ENCODE measurements at regions of chr1 and their contacts with region 1.

Region 1: GRCh38 chr1:174999216-174999925 is 376 bp upstream of the CACYBP start:
- DNase-seq: peak; percentile 100
- ATAC-seq: peak; percentile 73
- H3K4me3 ChIP-seq: peak overlapping the region; percentile 73 to 93 (median 91)
- H3K4me3 Mint-ChIP-seq: no peak overlapping the region
- H3K27ac ChIP-seq: peak overlapping the region; percentile 99
- H3K27ac Mint-ChIP-seq: no peak overlapping the region
- H3K4me1 ChIP-seq: peaks cover 22 to 23% of the 10 kb centered on the region in 2 donors
- H3K4me1 Mint-ChIP-seq: peaks cover 36% of the 10 kb centered on the region
- H3K27me3 ChIP-seq: no peaks in the 10 kb centered on the region
- H3K27me3 Mint-ChIP-seq: no peaks in the 10 kb centered on the region
- CTCF ChIP-seq: no peak

Region 2: GRCh38 chr1:173824331-173825081 is 1174.9 kb before region 1 on chr1 and contains the starts of genes CENPL and DARS2:
- CTCF ChIA-PET with region 1: no interaction called
- POLR2A ChIA-PET with region 1: no interaction called
- intact Hi-C with region 1: loop called (anchors 1 kb)
- DNase-seq: peak; percentile 94
- ATAC-seq: peak; percentile 89
- H3K4me3 ChIP-seq: peak within 1 kb of the TSS; percentile 78 to 100 (median 93)
- H3K4me3 Mint-ChIP-seq: peak within 1 kb of the TSS; percentile 92
- H3K27ac ChIP-seq: peak within 1 kb of the TSS; percentile 77 to 87
- H3K27ac Mint-ChIP-seq: peak within 1 kb of the TSS; percentile 95
- H3K4me1 ChIP-seq: peaks cover 8 to 18% of the 10 kb centered on the region in 2 donors
- H3K4me1 Mint-ChIP-seq: peaks cover 21% of the 10 kb centered on the region
- H3K27me3 ChIP-seq: no peaks in the 10 kb centered on the region
- H3K27me3 Mint-ChIP-seq: no peaks in the 10 kb centered on the region
- CTCF ChIP-seq: no peak
- total RNA-seq, gene CENPL: 9.7 and 14.4 TPM in 2 replicates
- total RNA-seq, gene DARS2: 17.0 and 17.3 TPM in 2 replicates

Region 3: GRCh38 chr1:174262349-174263241 is 736.8 kb before region 1 on chr1:
- CTCF ChIA-PET with region 1: interaction called, 8 read pairs
- POLR2A ChIA-PET with region 1: interaction called, 3 read pairs
- intact Hi-C with region 1: loop called (anchors 10 kb)
- DNase-seq: peak; percentile 58
- ATAC-seq: peak; percentile 62
- H3K4me3 ChIP-seq: no peak overlapping the region
- H3K4me3 Mint-ChIP-seq: no peak overlapping the region
- H3K27ac ChIP-seq: no peak overlapping the region
- H3K27ac Mint-ChIP-seq: peak overlapping the region; percentile 67
- H3K4me1 ChIP-seq: peaks cover 4 to 9% of the 10 kb centered on the region in 2 donors
- H3K4me1 Mint-ChIP-seq: peaks cover 20% of the 10 kb centered on the region
- H3K27me3 ChIP-seq: no peaks in the 10 kb centered on the region
- H3K27me3 Mint-ChIP-seq: no peaks in the 10 kb centered on the region
- CTCF ChIP-seq: peak; percentile 81

Region 4: GRCh38 chr1:174800216-174800851 is 199.0 kb before region 1 on chr1:
- CTCF ChIA-PET with region 1: interaction called, 19 read pairs
- POLR2A ChIA-PET with region 1: interaction called, 21 read pairs
- intact Hi-C with region 1: loop called (anchors 1 kb)
- DNase-seq: no peak
- ATAC-seq: no peak
- H3K4me3 ChIP-seq: peak overlapping the region; percentile 65 to 97 (median 68)
- H3K4me3 Mint-ChIP-seq: no peak overlapping the region
- H3K27ac ChIP-seq: peak overlapping the region; percentile 78 to 88
- H3K27ac Mint-ChIP-seq: no peak overlapping the region
- H3K4me1 ChIP-seq: peaks cover 14 to 17% of the 10 kb centered on the region in 2 donors
- H3K4me1 Mint-ChIP-seq: peaks cover 14% of the 10 kb centered on the region
- H3K27me3 ChIP-seq: no peaks in the 10 kb centered on the region
- H3K27me3 Mint-ChIP-seq: no peaks in the 10 kb centered on the region
- CTCF ChIP-seq: no peak

Region 5: DNA sequence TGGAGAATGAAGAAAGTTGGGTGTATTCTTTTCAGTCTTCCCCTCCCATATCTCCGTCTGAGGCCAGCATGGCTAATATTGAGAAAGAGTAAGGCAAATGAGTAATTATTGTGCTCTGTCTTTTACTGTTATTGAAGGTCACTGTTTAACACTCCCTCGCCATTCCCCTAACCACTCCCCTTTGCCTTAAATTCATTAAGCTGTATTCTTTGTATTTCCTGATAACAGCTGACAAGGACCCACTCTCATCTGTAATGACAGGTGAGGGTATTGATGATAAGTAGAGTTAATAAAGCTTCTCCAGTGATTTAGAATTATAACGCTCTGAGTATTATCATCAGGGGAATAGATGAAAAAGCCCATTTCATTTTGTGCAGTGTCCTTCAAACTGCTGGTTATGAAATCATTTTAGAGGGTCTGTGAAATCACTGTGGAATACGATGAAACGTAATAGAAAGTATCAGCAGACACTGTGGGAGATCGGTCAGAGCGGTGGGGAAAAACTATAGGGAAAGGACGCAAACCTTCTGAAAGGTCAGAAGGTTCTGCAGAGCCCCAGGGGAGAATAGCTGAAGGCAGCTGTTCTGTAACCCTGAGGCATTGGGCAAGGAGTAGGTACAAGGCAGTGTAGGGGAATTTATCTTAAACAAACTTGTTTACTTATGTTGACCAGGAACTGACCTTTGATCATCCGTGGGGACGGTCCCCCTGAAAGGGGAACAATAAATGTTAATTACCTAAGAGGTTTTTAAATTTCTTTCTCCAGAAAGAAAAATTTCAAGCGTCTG is 45.9 kb before region 1 on chr1:
- CTCF ChIA-PET with region 1: interaction called, 4 read pairs
- POLR2A ChIA-PET with region 1: interaction called, 13 read pairs
- intact Hi-C with region 1: no loop called
- DNase-seq: no peak
- ATAC-seq: peak; percentile 72
- H3K4me3 ChIP-seq: no peak overlapping the region
- H3K4me3 Mint-ChIP-seq: peak overlapping the region; percentile 83
- H3K27ac ChIP-seq: peak overlapping the region; percentile 45 to 76
- H3K27ac Mint-ChIP-seq: peak overlapping the region; percentile 85
- H3K4me1 ChIP-seq: peaks cover 27 to 37% of the 10 kb centered on the region in 2 donors
- H3K4me1 Mint-ChIP-seq: peaks cover 51% of the 10 kb centered on the region
- H3K27me3 ChIP-seq: no peaks in the 10 kb centered on the region
- H3K27me3 Mint-ChIP-seq: no peaks in the 10 kb centered on the region
- CTCF ChIP-seq: no peak

Region 6: GRCh38 chr1:174982971-174983689 is 16.2 kb before region 1 on chr1:
- CTCF ChIA-PET with region 1: interaction called, 19 read pairs
- POLR2A ChIA-PET with region 1: interaction called, 3 read pairs
- intact Hi-C with region 1: no loop called
- DNase-seq: peak; percentile 67
- ATAC-seq: peak; percentile 24
- H3K4me3 ChIP-seq: no peak overlapping the region
- H3K4me3 Mint-ChIP-seq: no peak overlapping the region
- H3K27ac ChIP-seq: no peak overlapping the region
- H3K27ac Mint-ChIP-seq: peak overlapping the region; percentile 17
- H3K4me1 ChIP-seq: no peaks in the 10 kb centered on the region
- H3K4me1 Mint-ChIP-seq: peaks cover 4% of the 10 kb centered on the region
- H3K27me3 ChIP-seq: no peaks in the 10 kb centered on the region
- H3K27me3 Mint-ChIP-seq: no peaks in the 10 kb centered on the region
- CTCF ChIP-seq: peak; percentile 81

Region 7: DNA sequence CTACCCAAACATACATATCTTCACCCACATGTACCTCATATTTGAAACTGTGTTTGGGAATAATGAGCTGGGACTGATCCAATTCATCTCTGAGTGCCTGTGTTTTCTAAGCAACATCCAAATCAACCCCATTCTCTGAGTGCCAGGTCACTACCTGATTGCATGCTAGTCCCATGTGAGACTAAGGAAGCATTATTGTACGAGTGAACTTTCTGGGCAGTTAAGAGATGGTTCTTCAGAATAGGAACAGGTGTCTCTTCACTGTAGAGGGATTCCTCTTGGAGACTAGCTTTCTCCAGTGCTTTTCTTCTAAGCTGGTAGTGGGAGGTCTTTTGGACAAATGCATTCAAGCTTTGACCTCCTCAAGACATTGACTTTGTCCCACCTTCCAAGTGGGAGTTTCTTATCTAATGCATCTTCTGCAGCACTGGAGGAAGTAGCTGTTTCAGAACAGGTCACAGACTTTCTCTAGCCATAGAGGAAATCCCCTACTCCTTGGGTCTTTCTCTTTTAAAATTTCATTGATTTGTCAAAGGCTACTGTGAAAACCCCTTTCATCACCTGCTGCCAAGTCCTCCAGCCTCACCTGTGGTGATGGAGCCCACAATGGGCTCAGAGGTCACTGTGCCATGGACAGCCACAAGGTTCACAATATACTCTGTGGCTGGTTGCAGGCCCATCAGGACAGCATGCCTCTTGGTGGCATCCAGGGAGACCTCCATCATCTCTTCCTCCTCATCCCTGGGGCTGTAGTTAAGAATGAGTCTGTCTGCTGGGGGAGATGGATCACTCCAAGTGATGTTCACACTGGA is 365.3 kb after region 1 on chr1:
- CTCF ChIA-PET with region 1: no interaction called
- POLR2A ChIA-PET with region 1: no interaction called
- intact Hi-C with region 1: no loop called
- DNase-seq: no peak
- ATAC-seq: no peak
- H3K4me3 ChIP-seq: no peak overlapping the region
- H3K4me3 Mint-ChIP-seq: no peak overlapping the region
- H3K27ac ChIP-seq: no peak overlapping the region
- H3K27ac Mint-ChIP-seq: no peak overlapping the region
- H3K4me1 ChIP-seq: no peaks in the 10 kb centered on the region
- H3K4me1 Mint-ChIP-seq: peaks cover 5% of the 10 kb centered on the region
- H3K27me3 ChIP-seq: no peaks in the 10 kb centered on the region
- H3K27me3 Mint-ChIP-seq: peaks cover 6% of the 10 kb centered on the region
- CTCF ChIP-seq: no peak